ENCODE measurements at regions of chr3 and their contacts with region 1.

Region 1: DNA sequence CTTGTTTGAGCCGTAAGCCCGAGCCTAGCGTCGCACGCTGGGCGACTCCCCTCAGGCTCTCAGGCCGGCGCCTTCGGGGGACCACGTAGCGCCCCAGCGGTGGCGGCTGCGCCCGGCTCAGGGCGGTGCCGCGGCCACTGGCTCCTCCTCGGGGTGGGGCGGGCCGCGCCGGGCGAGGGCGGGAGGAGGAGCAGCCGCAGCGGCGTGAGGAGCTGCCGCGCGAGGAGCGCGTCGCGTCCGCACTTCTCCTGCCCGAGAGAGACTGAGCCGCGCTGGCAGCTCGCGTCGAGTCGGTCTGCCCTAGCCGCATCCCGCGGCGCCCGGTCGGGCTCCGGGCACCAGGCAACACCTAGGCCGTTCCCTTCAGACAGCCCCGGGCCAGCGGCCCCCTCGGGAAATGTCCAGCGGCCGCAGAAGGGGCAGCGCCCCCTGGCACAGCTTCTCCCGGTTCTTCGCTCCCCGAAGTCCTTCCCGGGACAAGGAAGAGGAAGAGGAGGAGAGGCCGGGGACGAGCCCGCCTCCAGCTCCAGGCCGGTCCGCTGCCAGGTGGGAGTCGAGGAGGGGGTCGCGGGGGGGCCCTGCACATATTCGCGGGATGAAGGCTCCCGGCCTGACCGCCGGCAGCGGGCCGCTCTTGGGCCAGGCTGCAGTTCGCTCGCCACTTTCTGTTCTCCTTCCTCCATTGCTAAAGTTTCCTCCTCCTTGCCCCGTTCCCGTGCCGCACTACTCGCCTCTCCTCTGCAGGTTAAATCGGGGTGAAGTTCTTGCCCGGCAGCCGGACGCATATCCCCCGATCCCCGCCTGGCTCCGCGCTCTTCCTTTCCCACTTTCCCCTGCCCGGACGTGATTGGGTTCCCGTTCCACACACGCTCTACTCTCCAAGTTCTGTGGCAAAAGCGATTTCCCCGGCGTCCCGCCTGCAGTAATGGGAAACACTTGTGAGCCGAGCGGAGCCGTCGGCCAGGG is at the start of gene CRYBG3:
- DNase-seq: peak; percentile 85
- H3K4me3 ChIP-seq: peak within 1 kb of the TSS; percentile 61 to 96 (median 89)
- H3K27ac ChIP-seq: peak within 1 kb of the TSS; percentile 64
- H3K4me1 ChIP-seq: peaks cover 14% of the 10 kb centered on the region
- H3K27me3 ChIP-seq: peaks cover 0 to 2% of the 10 kb centered on the region in 2 experiments
- CTCF ChIP-seq: peak in 1 of 2 donors; percentile 47
- POLR2A ChIP-seq: peak; percentile 93
- total RNA-seq, gene CRYBG3: 15.0 and 15.9 TPM in 2 replicates

Region 2: DNA sequence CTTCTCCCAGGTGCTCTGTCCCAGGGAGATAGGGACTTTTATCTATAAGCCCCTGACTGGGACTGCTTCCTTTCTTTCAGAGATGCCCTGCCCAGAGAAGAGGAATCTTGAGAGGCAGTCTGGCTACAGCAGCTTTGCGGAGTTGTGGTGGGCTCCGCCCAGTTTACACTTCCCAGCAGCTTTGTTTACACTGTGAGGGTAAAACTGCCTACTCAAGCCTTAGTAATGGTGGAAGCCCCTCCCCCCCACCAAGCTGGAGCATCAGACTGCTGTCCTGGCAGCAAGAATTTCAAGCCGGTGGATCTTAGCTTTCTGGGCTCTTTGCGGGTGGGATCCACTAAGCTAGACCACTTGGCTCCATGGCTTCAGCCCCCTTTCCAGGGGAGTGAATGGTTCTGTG is 311.3 kb before region 1 on chr3:
- CTCF ChIA-PET with region 1: no interaction called
- POLR2A ChIA-PET with region 1: no interaction called
- dilution Hi-C with region 1: no loop called
- intact Hi-C with region 1: no loop called
- DNase-seq: no peak
- H3K4me3 ChIP-seq: no peak overlapping the region
- H3K27ac ChIP-seq: no peak overlapping the region
- H3K4me1 ChIP-seq: no peaks in the 10 kb centered on the region
- H3K27me3 ChIP-seq: no peaks in the 10 kb centered on the region
- CTCF ChIP-seq: no peak
- POLR2A ChIP-seq: no peak

Region 3: DNA sequence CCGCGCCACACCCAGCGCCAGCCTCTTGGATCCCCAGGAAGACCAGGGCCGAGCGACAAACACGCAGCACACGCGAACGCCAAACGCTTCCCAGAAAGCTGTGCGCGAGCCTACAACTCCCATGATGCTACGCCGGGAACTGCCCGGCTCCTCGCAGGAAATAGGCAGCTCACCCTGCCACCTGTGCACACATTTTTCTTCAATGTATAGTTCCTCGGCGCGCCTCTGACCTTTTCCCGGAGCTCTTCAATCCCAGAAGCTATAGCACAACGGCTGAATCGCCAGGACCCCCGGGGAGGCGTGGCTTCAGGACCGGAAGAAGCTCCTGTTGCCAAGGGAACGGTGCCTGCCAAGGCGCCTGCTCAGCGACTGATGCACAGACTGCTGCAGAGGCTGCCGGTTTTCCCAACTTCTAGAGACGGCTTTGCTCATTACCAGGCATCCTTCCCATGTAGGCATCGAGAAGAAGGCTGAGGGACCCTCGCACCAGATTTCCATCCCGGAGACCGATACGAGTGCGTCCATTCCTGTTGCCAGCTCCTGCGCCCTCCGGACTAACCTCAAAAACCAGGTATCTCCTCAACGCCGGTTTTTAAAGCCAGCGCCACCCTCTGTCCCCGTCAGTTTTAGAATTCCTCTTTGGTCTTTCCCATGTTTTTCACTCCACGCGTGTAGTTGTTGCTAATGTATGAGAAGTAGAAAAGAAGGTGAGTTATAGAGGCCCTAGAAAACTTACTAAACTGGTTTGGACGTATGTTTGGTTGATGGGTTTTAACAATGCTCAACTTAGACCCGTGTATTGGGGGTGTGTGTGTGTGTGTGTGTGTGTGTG is 57.5 kb before region 1 on chr3 and contains the start of gene ARL6:
- CTCF ChIA-PET with region 1: interaction called, 11 read pairs
- POLR2A ChIA-PET with region 1: no interaction called
- dilution Hi-C with region 1: no loop called
- intact Hi-C with region 1: loop called (anchors 2 kb)
- DNase-seq: peak; percentile 87
- H3K4me3 ChIP-seq: peak within 1 kb of the TSS; percentile 32 to 83 (median 77)
- H3K27ac ChIP-seq: peak within 1 kb of the TSS; percentile 6
- H3K4me1 ChIP-seq: no peaks in the 10 kb centered on the region
- H3K27me3 ChIP-seq: no peaks in the 10 kb centered on the region
- CTCF ChIP-seq: no peak
- POLR2A ChIP-seq: peak; percentile 59
- total RNA-seq, gene ARL6: 5.8 and 6.1 TPM in 2 replicates

Region 4: GRCh38 chr3:97793420-97794019 is 28.6 kb before region 1 on chr3:
- CTCF ChIA-PET with region 1: interaction called, 5 read pairs
- POLR2A ChIA-PET with region 1: no interaction called
- dilution Hi-C with region 1: no loop called
- intact Hi-C with region 1: loop called (anchors 1 kb)
- DNase-seq: peak; percentile 65
- H3K4me3 ChIP-seq: no peak overlapping the region
- H3K27ac ChIP-seq: no peak overlapping the region
- H3K4me1 ChIP-seq: no peaks in the 10 kb centered on the region
- H3K27me3 ChIP-seq: no peaks in the 10 kb centered on the region
- CTCF ChIP-seq: peak; percentile 53 to 64
- POLR2A ChIP-seq: no peak

Region 5: DNA sequence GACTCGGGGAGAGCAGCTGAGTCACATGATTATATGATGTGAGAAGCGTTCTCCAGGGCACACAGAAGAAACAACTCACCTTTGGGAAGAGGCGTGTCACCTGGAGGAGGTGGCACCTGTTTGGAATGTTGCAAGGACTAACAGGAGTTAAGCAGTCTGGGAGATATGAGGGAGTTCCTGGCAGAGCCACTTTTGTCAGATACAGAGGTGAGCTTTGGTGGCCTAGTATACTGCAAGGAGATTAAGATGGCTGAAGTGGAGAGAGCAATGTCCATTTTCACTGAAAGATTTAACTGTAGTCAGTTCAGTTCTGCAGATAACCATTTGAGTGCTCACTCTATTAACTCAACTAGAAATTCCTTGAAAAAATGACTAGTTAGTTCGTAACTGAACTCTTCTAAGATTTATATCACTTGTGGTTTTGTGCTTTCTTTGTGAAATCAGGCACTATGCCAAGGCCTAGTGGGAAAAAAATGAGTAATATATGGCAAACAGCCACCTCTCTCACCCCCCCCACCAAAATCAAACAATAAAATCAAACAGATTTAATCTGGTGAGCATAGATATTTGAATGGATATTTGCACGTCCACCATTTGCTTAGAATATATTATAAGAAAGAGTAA is 61.0 kb after region 1 on chr3:
- CTCF ChIA-PET with region 1: interaction called, 3 read pairs
- POLR2A ChIA-PET with region 1: no interaction called
- dilution Hi-C with region 1: no loop called
- intact Hi-C with region 1: loop called (anchors 2 kb)
- DNase-seq: peak; percentile 74
- H3K4me3 ChIP-seq: no peak overlapping the region
- H3K27ac ChIP-seq: no peak overlapping the region
- H3K4me1 ChIP-seq: peaks cover 20% of the 10 kb centered on the region
- H3K27me3 ChIP-seq: no peaks in the 10 kb centered on the region
- CTCF ChIP-seq: no peak
- POLR2A ChIP-seq: no peak

Region 6: DNA sequence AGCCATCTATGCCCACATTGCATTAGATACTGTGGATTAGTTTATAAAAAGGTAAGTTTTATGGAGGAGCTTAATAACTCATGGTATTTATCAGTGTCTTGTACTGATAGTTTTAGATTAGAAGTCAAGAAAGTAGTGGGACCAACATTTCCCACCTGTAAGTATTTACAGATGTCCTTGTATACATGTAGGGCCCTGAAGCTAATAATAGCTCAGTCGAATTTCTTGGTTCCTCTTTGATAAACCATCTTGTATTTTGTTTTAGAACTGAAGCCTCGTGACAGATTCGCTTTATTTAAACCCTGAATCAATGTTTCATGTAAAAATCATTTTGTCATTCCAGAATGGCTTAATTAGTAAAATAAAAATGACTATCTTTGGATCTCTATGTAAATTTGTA is 73.1 kb after region 1 on chr3:
- CTCF ChIA-PET with region 1: no interaction called
- POLR2A ChIA-PET with region 1: no interaction called
- dilution Hi-C with region 1: no loop called
- intact Hi-C with region 1: loop called (anchors 5 kb)
- DNase-seq: no peak
- H3K4me3 ChIP-seq: no peak overlapping the region
- H3K27ac ChIP-seq: no peak overlapping the region
- H3K4me1 ChIP-seq: no peaks in the 10 kb centered on the region
- H3K27me3 ChIP-seq: no peaks in the 10 kb centered on the region
- CTCF ChIP-seq: no peak
- POLR2A ChIP-seq: no peak

Region 7: DNA sequence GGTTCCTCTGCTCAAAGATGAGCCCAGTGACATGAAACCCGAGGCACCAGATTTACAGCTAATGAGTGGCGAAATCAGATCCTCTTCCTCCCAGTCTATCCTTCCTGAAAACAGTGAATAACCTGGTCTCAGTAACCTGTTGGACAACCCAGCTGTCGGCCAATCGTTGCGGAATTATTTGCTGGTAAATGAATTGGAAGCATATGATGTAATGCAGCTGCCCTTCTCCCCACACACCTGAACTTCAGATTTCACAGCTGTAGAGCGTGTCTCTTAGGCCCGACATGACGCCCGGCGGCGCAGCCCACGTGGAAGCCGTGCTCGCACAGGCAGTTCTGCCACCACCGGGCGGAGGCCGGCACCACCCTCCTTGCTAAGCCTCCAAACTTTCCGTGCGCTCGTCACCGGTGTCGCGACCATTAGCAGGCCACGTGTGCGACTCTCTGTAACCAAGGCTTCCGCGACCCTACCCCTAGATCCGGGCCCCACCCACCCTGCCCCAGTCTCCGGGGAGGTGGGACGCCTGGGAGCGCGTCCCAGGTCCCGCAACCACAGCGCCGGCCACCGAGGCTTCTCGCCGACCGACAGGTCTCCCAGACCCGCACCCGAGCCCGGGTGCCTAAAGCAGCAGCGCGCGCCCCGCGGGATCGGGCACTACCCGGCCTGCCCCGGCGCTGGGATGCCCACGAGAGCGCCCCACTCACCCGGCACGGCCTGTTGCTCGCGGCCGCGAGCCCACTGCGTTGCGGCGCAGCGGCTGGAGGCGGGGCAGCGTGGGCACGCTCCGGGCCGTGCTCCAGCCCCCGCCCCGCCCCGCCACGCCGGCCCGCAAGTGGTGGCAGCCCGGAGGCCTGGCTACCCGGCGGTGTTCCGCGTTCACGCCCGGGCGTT is 149.8 kb after region 1 on chr3 and contains the start of gene RIOX2:
- CTCF ChIA-PET with region 1: interaction called, 3 read pairs
- POLR2A ChIA-PET with region 1: no interaction called
- dilution Hi-C with region 1: no loop called
- intact Hi-C with region 1: loop called (anchors 1 kb)
- DNase-seq: peak; percentile 62
- H3K4me3 ChIP-seq: peak within 1 kb of the TSS; percentile 35 to 97 (median 56)
- H3K27ac ChIP-seq: peak within 1 kb of the TSS; percentile 29
- H3K4me1 ChIP-seq: peaks cover 17% of the 10 kb centered on the region
- H3K27me3 ChIP-seq: no peaks in the 10 kb centered on the region
- CTCF ChIP-seq: peak in 1 of 2 donors; percentile 15
- POLR2A ChIP-seq: peak; percentile 82
- total RNA-seq, gene RIOX2: 24.5 and 30.5 TPM in 2 replicates

Measured in endothelial cell of umbilical vein (primary cell).